ENCODE measurements at regions of chr6 and their contacts with region 1.

Region 1: DNA sequence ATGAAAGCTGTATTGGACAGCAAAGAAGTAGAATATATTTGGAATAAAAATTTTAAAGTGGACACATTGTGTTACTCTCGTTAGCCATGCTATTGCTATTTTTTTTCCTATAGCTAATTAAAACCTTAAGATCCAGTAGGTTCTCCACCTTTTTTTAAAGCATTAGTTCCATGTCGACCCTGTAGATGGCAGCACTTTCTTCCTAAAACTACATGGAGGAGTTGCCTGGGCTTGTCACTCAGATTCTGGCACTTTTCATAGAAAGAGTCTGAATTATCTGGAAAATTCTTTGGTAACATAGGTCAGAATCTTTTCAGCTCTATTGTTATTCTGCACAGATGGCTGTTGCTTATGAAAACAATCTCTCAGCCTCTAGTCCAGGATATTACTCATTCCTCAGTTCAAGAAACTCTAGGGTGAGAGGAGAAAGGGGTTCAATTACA is 42.0 kb upstream of the ESR1 start:
- DNase-seq: peak; percentile 17 to 25
- ATAC-seq: peak; percentile 69 to 71
- H3K4me3 ChIP-seq: no peak overlapping the region
- H3K27ac ChIP-seq: no peak overlapping the region
- H3K4me1 ChIP-seq: no peaks in the 10 kb centered on the region
- H3K27me3 ChIP-seq: no peaks in the 10 kb centered on the region
- CTCF ChIP-seq: peak; percentile 64 to 78 (median 72)
- POLR2A ChIP-seq: no peak

Region 2: GRCh38 chr6:151494235-151494935 is 271.1 kb before region 1 on chr6:
- in situ Hi-C with region 1: no loop called
- intact Hi-C with region 1: no loop called
- DNase-seq: no peak
- ATAC-seq: no peak
- H3K4me3 ChIP-seq: peak overlapping the region; percentile 45 to 68 (median 58)
- H3K27ac ChIP-seq: no peak overlapping the region
- H3K4me1 ChIP-seq: no peaks in the 10 kb centered on the region
- H3K27me3 ChIP-seq: peaks cover 9 to 28% (median 10%) of the 10 kb centered on the region in 3 donors
- CTCF ChIP-seq: no peak
- POLR2A ChIP-seq: no peak

Region 3: DNA sequence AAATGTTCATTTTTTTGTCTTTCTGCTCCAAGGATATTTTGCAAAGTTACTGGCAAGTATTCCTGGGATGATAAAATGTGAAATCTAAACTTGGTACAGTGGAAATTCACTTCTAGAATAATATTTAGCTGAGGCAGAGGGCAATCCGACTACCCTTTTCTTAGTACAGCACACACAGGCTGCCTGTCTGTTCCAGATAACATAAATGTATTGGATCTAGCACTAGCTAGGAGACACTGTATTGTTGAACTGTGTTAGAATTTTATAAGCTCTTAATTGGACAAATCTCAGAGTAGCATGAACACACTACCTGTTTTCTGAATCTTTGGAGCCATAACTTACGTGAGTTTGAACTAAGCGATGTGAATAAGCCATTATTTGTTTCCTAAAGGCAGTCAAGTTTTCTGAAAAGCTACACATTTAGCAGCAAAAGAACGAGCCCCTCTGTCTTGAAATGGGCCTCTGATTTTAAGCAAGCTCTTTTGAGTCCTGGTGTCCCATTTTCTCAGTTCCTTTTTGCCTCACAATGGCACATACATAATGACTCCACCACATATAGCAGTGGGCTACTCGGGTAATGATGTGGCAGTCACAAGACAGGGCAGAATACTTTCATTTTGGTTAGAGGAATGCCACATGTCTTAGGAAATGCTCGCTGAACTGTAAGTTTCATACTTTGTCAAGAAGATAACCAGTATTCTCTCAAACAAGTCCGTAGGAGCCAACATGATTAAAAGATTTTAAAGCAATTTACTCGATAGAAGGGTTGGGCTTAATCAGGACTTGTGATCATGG is 74.5 kb before region 1 on chr6:
- in situ Hi-C with region 1: no loop called
- intact Hi-C with region 1: loop called (anchors 5 kb)
- DNase-seq: no peak
- ATAC-seq: peak; percentile 72 to 80
- H3K4me3 ChIP-seq: peak overlapping the region; percentile 30 to 54 (median 46)
- H3K27ac ChIP-seq: peak overlapping the region; percentile 32 to 71 (median 60)
- H3K4me1 ChIP-seq: peaks cover 6 to 18% of the 10 kb centered on the region in 2 donors
- H3K27me3 ChIP-seq: no peaks in the 10 kb centered on the region
- CTCF ChIP-seq: no peak
- POLR2A ChIP-seq: no peak

Region 4: DNA sequence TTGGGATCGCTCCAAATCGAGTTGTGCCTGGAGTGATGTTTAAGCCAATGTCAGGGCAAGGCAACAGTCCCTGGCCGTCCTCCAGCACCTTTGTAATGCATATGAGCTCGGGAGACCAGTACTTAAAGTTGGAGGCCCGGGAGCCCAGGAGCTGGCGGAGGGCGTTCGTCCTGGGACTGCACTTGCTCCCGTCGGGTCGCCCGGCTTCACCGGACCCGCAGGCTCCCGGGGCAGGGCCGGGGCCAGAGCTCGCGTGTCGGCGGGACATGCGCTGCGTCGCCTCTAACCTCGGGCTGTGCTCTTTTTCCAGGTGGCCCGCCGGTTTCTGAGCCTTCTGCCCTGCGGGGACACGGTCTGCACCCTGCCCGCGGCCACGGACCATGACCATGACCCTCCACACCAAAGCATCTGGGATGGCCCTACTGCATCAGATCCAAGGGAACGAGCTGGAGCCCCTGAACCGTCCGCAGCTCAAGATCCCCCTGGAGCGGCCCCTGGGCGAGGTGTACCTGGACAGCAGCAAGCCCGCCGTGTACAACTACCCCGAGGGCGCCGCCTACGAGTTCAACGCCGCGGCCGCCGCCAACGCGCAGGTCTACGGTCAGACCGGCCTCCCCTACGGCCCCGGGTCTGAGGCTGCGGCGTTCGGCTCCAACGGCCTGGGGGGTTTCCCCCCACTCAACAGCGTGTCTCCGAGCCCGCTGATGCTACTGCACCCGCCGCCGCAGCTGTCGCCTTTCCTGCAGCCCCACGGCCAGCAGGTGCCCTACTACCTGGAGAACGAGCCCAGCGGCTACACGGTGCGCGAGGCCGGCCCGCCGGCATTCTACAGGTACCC is 42.3 kb after region 1 on chr6 and contains the start of gene ESR1:
- in situ Hi-C with region 1: no loop called
- intact Hi-C with region 1: loop called (anchors 5 kb)
- DNase-seq: peak; percentile 36 to 63
- ATAC-seq: peak; percentile 10 to 11
- H3K4me3 ChIP-seq: peak within 1 kb of the TSS; percentile 65 to 77 (median 68)
- H3K27ac ChIP-seq: peak within 1 kb of the TSS; percentile 79 to 92 (median 86)
- H3K4me1 ChIP-seq: peaks cover 25 to 41% of the 10 kb centered on the region in 2 donors
- H3K27me3 ChIP-seq: no peaks in the 10 kb centered on the region
- CTCF ChIP-seq: no peak
- POLR2A ChIP-seq: peak in 1 of 2 donors; percentile 53
- total RNA-seq, gene ESR1: 0.61 to 1.1 (median 1.1) TPM

Region 5: DNA sequence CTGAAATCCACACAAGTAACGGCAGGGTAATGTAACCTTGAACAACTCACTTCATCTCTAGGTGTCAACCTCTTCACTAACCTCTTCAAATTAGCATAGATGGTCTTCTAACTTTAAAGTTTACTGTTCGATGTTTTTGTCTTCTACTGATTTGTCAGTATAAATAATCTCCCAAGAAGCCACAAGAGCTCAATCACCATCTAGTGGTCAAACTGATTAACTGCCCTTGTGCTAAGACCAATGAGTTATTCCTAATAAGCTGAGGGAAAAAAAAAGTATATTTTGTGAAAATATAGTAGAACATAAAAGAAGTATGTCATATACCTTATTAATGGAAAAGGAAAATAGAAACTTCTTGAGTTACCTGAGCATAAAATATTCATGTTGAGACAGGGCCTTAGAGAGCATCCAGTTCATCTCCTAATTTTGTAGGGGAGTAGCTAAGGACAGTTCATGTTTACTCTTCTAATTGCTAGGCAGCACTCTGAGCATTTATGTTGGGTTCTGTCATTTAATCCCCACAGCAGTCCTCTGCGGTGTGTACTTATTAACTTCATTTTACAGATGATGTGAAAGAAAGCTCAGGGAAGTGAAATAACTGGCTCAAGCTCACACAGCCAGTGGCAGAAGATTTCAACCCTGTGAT is 359.1 kb after region 1 on chr6:
- in situ Hi-C with region 1: loop called (anchors 5 to 10 kb)
- intact Hi-C with region 1: loop called (anchors 1 kb)
- DNase-seq: no peak
- ATAC-seq: peak; percentile 68 to 72
- H3K4me3 ChIP-seq: no peak overlapping the region
- H3K27ac ChIP-seq: peak overlapping the region in 2 of 4 donors; percentile 11 to 71
- H3K4me1 ChIP-seq: peaks cover 33 to 40% of the 10 kb centered on the region in 2 donors
- H3K27me3 ChIP-seq: no peaks in the 10 kb centered on the region
- CTCF ChIP-seq: peak; percentile 74 to 94 (median 85)
- POLR2A ChIP-seq: no peak

Region 6: DNA sequence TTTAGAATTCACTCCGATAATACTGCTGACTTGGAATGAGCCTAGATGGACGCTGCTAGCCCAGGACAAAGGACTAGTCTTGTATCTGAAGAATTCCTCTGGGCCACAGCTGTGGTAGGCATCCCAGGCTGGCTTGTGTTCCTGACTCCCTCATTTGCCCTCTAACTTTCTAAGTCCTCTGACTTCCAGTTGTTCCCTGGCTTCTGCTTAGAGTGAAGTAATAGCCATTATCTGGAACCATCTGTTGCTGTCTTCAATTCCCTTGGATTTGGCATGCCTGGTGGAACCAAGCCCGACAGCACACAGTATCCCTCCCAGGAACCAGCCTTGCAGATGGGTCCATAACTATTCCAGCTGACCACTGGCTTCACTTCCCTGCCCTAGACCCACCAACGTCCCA is 495.7 kb after region 1 on chr6:
- in situ Hi-C with region 1: loop called (anchors 5 to 25 kb)
- intact Hi-C with region 1: no loop called
- DNase-seq: peak; percentile 52 to 72
- ATAC-seq: peak; percentile 98 to 99
- H3K4me3 ChIP-seq: no peak overlapping the region
- H3K27ac ChIP-seq: peak overlapping the region; percentile 56 to 75 (median 68)
- H3K4me1 ChIP-seq: peaks cover 14 to 15% of the 10 kb centered on the region in 2 donors
- H3K27me3 ChIP-seq: no peaks in the 10 kb centered on the region
- CTCF ChIP-seq: no peak
- POLR2A ChIP-seq: no peak

Region 7: DNA sequence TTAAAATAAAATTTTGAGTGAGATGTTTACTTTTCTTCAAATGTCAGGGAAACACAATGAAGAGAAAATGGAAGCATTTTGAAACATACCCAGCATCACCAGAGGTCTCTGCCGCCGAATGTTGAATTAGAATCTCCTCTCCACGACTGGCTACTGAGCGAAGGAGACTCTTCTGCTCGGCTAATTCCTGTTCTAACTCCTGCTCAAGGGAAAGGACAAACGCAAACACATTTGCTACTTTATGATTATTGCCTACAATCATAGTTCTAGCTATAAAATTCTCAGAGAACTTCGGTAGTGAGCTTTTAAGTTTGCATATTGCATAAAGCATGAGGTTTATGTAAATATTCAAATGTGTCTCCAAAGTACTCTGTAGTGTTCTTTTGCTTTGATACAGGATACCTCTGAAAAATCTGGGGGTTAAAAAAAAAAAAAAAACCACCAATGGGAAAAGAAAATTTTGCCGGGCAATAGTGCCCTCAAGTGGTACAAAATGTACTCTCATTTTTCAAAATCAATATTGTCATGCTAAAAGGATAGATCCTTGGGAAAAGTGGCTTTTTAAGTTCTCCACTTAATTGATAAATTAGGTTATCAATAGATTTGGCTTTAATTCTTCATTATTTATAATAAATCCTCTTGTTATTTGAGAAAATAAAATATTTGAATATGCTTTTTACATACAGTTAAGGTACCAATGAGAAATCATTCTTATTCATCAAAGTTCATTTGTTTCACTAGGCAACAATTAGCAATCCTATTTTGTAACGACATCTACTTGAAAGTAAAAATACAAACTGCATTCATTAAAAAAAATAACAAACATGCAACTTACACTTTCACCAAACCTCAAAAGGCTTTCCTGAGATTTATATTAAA is 502.7 kb after region 1 on chr6:
- in situ Hi-C with region 1: loop called (anchors 5 to 25 kb)
- intact Hi-C with region 1: loop called (anchors 2 kb)
- DNase-seq: no peak
- ATAC-seq: peak in 1 of 2 donors; percentile 11
- H3K4me3 ChIP-seq: peak overlapping the region in 1 of 4 donors; percentile 22
- H3K27ac ChIP-seq: peak overlapping the region; percentile 71 to 84 (median 78)
- H3K4me1 ChIP-seq: peaks cover 40 to 45% of the 10 kb centered on the region in 2 donors
- H3K27me3 ChIP-seq: no peaks in the 10 kb centered on the region
- CTCF ChIP-seq: peak; percentile 32 to 70 (median 47)
- POLR2A ChIP-seq: no peak